Breast epithelium (tissue), 4 donors: ENCODE measurements at regions of chr21 and their contacts with region 1.

Region 1: DNA sequence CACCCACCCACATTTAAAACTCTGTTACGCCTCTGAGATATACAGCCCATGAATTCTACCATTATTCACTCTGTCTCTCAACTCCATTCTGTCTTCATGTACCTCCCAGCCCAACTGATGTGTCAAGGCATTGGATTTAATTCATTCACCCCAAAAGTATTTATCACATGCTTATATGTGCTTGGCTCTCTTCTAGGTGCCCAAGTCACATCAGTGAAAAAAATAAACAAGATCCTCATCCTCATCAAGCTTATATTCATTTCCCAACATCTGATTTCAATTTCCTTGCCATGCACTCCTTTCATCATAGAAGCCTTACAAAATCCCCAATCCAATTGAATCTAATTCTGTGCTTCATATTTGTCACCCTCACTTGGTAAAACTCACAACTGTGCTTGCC is 967.6 kb downstream of the LTN1 start:
- DNase-seq: no peak
- H3K4me3 ChIP-seq: no peak overlapping the region
- H3K27ac ChIP-seq: no peak overlapping the region
- H3K4me1 ChIP-seq: no peaks in the 10 kb centered on the region
- H3K27me3 ChIP-seq: no peaks in the 10 kb centered on the region
- CTCF ChIP-seq: no peak
- POLR2A ChIP-seq: no peak

Region 2: DNA sequence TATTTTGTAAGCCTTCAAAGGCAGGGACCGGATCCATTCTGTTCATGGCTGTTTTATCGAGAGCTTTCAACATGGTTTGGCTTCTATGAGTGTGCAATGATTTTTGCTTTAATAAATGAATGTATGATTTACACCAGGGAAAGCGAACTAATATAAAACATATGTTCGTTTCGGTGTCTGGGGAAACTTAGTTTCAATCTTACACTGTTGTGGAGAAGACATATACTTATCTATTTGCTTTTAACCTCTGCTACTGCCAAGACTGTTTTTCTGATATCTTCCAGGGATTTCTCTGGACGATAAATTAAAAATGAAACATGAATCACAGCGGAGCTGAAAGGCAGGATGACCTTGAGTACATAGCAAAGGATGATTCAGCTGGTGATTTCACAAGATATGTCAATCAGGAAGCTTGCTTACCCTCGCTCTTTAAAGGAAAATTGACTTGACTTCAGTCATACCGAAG is 1437.3 kb before region 1 on chr21:
- intact Hi-C with region 1: no loop called
- DNase-seq: no peak
- H3K4me3 ChIP-seq: peak overlapping the region in 1 of 3 donors; percentile 4
- H3K27ac ChIP-seq: no peak overlapping the region
- H3K4me1 ChIP-seq: no peaks in the 10 kb centered on the region
- H3K27me3 ChIP-seq: no peaks in the 10 kb centered on the region
- CTCF ChIP-seq: no peak
- POLR2A ChIP-seq: no peak

Region 3: GRCh38 chr21:27189870-27190269 is 835.2 kb before region 1 on chr21:
- intact Hi-C with region 1: loop called (anchors 5 kb)
- DNase-seq: no peak
- H3K4me3 ChIP-seq: no peak overlapping the region
- H3K27ac ChIP-seq: no peak overlapping the region
- H3K4me1 ChIP-seq: no peaks in the 10 kb centered on the region
- H3K27me3 ChIP-seq: no peaks in the 10 kb centered on the region
- CTCF ChIP-seq: no peak
- POLR2A ChIP-seq: no peak

Region 4: DNA sequence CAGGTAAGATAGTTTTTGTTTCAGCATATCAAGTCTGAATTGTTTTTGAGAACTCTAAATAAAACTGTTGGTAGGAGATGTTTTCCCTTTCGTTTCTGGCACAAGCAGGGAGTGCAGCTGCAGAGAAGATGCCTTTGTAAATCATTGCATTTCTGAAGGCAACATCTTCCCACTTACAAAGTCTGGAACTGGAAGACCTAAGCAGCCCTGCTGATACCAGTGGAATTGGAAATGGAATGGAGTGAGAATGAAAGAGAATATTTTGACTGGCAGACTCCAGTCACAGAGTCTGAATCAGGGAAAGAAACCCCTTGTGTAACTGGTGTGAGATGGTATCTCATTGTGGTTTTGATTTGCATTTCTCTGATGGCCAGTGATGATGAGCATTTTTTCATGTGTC is 152.0 kb after region 1 on chr21:
- intact Hi-C with region 1: no loop called
- DNase-seq: no peak
- H3K4me3 ChIP-seq: no peak overlapping the region
- H3K27ac ChIP-seq: no peak overlapping the region
- H3K4me1 ChIP-seq: no peaks in the 10 kb centered on the region
- H3K27me3 ChIP-seq: no peaks in the 10 kb centered on the region
- CTCF ChIP-seq: no peak
- POLR2A ChIP-seq: no peak